ENCODE measurements at regions of chr14 and their contacts with region 1.

Region 1: GRCh38 chr14:70856851-70857495 is 47.7 kb upstream of the MAP3K9 start:
- DNase-seq: peak in 1 of 14 experiments; percentile 13
- ATAC-seq: no peak
- H3K4me3 ChIP-seq: no peak overlapping the region
- H3K4me3 Mint-ChIP-seq: no peak overlapping the region
- H3K27ac ChIP-seq: no peak overlapping the region
- H3K27ac Mint-ChIP-seq: no peak overlapping the region
- H3K4me1 ChIP-seq: no peaks in the 10 kb centered on the region
- H3K4me1 Mint-ChIP-seq: no peaks in the 10 kb centered on the region
- H3K27me3 ChIP-seq: no peaks in the 10 kb centered on the region
- H3K27me3 Mint-ChIP-seq: no peaks in the 10 kb centered on the region
- CTCF ChIP-seq: no peak

Region 2: GRCh38 chr14:70780396-70781075 is 76.4 kb before region 1 on chr14:
- CTCF ChIA-PET with region 1: no interaction called
- POLR2A ChIA-PET with region 1: no interaction called
- intact Hi-C with region 1: no loop called
- DNase-seq: no peak
- ATAC-seq: no peak
- H3K4me3 ChIP-seq: no peak overlapping the region
- H3K4me3 Mint-ChIP-seq: no peak overlapping the region
- H3K27ac ChIP-seq: no peak overlapping the region
- H3K27ac Mint-ChIP-seq: no peak overlapping the region
- H3K4me1 ChIP-seq: peaks cover 4% of the 10 kb centered on the region
- H3K4me1 Mint-ChIP-seq: peaks cover 27% of the 10 kb centered on the region
- H3K27me3 ChIP-seq: no peaks in the 10 kb centered on the region
- H3K27me3 Mint-ChIP-seq: no peaks in the 10 kb centered on the region
- CTCF ChIP-seq: no peak

Region 3: DNA sequence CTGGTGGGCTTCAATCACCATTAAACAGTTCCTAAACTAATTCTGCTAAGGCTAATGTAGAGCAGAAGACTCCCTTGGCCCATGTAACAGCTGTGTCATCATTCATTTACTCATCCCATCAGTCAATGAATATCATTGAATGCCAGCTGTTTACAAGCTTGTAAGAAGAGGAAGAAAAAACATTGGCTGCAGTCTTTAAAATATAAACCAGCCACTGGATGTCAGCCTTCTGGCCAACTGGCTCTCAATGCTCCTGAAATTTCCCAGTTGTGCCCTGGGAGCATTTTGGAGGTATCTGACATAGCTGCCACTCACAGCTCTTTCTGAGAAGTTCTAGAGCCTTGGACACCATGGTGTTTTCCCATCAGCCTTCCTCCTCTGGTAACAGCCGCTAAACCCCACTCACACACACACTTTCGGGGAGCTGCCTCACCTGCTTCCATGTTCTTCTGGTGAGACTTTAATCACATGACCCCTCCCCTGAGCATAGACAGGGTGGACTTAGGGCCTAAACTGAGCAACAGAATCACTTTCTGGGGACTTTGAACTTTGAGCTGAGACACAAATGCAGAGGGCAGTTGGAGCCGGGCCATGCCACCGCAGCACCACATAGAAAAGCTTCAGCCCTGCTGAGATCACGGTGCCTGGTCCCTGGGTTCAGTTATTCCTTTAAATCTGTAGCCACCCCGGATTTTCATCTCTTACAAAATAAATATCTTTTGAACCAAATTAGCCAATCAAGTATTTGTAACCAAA is 29.4 kb before region 1 on chr14:
- CTCF ChIA-PET with region 1: no interaction called
- POLR2A ChIA-PET with region 1: no interaction called
- intact Hi-C with region 1: loop called in 1 of 2 experiments (anchors 5 kb)
- DNase-seq: no peak
- ATAC-seq: no peak
- H3K4me3 ChIP-seq: no peak overlapping the region
- H3K4me3 Mint-ChIP-seq: no peak overlapping the region
- H3K27ac ChIP-seq: no peak overlapping the region
- H3K27ac Mint-ChIP-seq: no peak overlapping the region
- H3K4me1 ChIP-seq: peaks cover 5% of the 10 kb centered on the region
- H3K4me1 Mint-ChIP-seq: peaks cover 13% of the 10 kb centered on the region
- H3K27me3 ChIP-seq: peaks cover 0 to 8% of the 10 kb centered on the region in 2 experiments
- H3K27me3 Mint-ChIP-seq: peaks cover 14% of the 10 kb centered on the region
- CTCF ChIP-seq: no peak